Activated T-helper 2 cell treated with anti-CD3 and anti-CD28 coated beads, Interferon-gamma antibody, Interleukin-2, Interleukin-4, amounts not matched to agents 10 μg/mL and 5 μg/mL and 100 μg/mL, durations not matched to agents 14 hours and 24 hours and 36 hours (primary cell): ENCODE measurements at regions of chr6 and their contacts with region 1.

Region 1: DNA sequence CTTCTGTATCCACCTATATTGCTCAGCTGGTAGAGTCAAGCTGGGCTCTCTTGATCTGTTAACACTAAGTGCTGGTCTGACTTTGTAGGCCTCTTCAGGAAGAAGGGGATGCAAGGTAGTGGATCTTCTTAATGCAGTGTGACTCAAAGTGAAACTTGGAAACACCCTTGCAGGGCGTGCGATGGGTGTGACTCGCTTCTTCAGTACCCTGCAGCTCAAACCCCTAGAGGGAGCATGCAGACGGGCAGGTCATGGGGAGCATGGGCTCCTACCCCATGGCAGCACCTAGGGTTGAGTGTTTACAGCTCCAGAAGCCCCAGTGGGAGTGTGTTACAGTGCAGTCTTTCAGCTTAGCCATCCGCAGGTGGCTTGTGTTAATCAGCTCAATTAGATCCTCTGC is 757 bp upstream of the SAMD3 start:
- DNase-seq: peak; percentile 73
- H3K4me3 Mint-ChIP-seq: no peak overlapping the region
- H3K27ac Mint-ChIP-seq: peak overlapping the region; percentile 24
- H3K4me1 Mint-ChIP-seq: peaks cover 24% of the 10 kb centered on the region
- H3K27me3 Mint-ChIP-seq: no peaks in the 10 kb centered on the region

Region 2: DNA sequence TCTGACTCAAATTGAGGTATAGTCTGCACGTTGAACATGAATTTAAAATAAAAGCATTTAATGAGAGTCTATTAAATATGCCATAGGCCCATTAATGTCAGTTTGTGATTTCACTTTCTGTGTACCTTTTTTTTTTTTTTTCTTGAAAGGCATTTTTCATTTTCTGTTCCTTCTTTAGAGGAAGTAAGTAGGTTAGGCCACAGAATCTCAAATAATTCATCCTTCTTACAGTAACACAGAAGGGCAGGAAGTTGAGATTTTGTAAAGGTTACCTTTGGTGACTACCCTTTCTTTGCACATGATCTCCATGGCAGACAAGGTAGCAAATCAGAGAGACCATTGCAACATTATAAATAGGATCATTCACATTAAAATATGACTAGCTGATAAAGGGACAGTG is 195.6 kb before region 1 on chr6:
- intact Hi-C with region 1: loop called (anchors 5 kb)
- DNase-seq: no peak
- H3K4me3 Mint-ChIP-seq: no peak overlapping the region
- H3K27ac Mint-ChIP-seq: peak overlapping the region; percentile 67
- H3K4me1 Mint-ChIP-seq: peaks cover 36% of the 10 kb centered on the region
- H3K27me3 Mint-ChIP-seq: peaks cover 3% of the 10 kb centered on the region

Region 3: GRCh38 chr6:130178692-130179091 is 44.8 kb before region 1 on chr6:
- intact Hi-C with region 1: no loop called
- DNase-seq: no peak
- H3K4me3 Mint-ChIP-seq: no peak overlapping the region
- H3K27ac Mint-ChIP-seq: no peak overlapping the region
- H3K4me1 Mint-ChIP-seq: peaks cover 27% of the 10 kb centered on the region
- H3K27me3 Mint-ChIP-seq: no peaks in the 10 kb centered on the region

Region 4: GRCh38 chr6:130189531-130190397 is 33.7 kb before region 1 on chr6:
- intact Hi-C with region 1: loop called (anchors 5 kb)
- DNase-seq: no peak
- H3K4me3 Mint-ChIP-seq: no peak overlapping the region
- H3K27ac Mint-ChIP-seq: no peak overlapping the region
- H3K4me1 Mint-ChIP-seq: peaks cover 38% of the 10 kb centered on the region
- H3K27me3 Mint-ChIP-seq: no peaks in the 10 kb centered on the region

Region 5: DNA sequence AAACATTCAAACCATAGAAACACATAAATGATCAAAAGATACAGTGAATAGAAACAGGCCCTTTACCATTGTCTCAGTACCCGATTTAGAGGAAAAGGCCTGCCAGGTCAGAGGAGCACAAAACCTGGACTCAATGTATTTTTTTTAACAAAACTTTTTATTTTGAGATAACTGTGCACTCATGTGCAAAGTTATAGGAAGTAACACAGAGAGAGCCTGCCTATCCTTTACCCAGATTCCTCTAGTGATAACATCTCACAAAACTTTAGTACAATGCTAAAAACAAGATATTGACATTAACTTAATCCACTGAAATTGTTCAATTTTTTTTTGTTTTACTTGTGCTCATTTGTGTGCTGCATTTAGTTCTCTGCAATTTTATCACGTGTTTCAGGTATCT is 36.0 kb after region 1 on chr6:
- intact Hi-C with region 1: loop called (anchors 2 kb)
- DNase-seq: no peak
- H3K4me3 Mint-ChIP-seq: peak overlapping the region; percentile 23
- H3K27ac Mint-ChIP-seq: peak overlapping the region; percentile 64
- H3K4me1 Mint-ChIP-seq: peaks cover 36% of the 10 kb centered on the region
- H3K27me3 Mint-ChIP-seq: no peaks in the 10 kb centered on the region